Head of caudate nucleus (tissue), 42 donors: ENCODE measurements at regions of chr20 and their contacts with region 1.

Region 1: GRCh38 chr20:63627129-63627750 is 339 bp upstream of the GMEB2 start:
- DNase-seq: peak; percentile 77 to 96 (median 91)

Region 2: GRCh38 chr20:63537525-63538203 is 89.6 kb before region 1 on chr20:
- intact Hi-C with region 1: loop called (anchors 10 kb)
- DNase-seq: peak; percentile 31 to 89 (median 76)

Region 3: GRCh38 chr20:63657937-63658748 is 30.9 kb after region 1 on chr20 and contains the start of gene RTEL1:
- intact Hi-C with region 1: loop called (anchors 2 kb)
- DNase-seq: peak; percentile 82 to 97 (median 93)

Region 4: GRCh38 chr20:63739130-63740069 is 112.2 kb after region 1 on chr20 and contains the start of gene SLC2A4RG:
- intact Hi-C with region 1: loop called (anchors 5 kb)
- DNase-seq: peak in 41 of 42 donors; percentile 38 to 90 (median 81)